ENCODE measurements at regions of chr2 and their contacts with region 1.

Region 1: GRCh38 chr2:36695746-36696415 is 626 bp upstream of the VIT start:
- DNase-seq: peak; percentile 57
- ATAC-seq: peak; percentile 95
- H3K4me3 ChIP-seq: no peak overlapping the region
- H3K27ac ChIP-seq: no peak overlapping the region
- H3K4me1 ChIP-seq: peaks cover 12% of the 10 kb centered on the region
- H3K27me3 ChIP-seq: no peaks in the 10 kb centered on the region
- CTCF ChIP-seq: peak; percentile 51

Region 2: DNA sequence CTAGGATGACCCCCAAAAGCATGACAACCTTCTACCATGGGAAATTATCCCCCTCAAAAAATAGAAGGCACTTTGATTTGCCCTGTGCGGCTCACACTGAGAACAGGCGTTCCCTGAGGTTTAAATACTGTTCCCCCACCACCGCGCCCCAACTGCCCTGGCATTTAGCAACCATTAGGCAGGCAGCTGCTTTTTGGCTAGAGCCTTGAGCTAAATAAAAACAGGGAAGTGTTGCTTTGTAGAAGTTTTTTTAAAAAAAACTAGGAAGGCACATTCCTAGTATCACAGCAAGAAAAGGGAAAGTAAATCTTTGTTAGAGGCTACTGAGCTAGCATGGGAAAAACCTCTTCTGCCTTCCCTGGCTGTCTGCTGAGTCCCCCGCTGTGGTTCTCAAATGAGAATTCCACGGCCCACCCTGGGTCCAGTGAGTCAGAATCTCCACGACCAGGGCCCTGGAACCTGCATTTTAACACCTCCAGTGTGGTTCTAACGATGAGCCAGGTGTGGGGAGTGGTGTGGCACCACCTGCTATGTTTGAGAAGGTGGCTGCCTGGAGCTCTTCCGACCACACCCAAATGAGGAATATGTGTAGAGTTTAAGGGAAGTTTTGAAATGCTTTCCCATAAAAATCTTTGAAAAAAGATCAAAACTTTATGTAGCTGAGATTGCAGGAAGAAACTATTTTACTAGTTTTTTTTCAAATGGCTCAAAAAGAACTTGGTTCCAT is 67.0 kb after region 1 on chr2:
- CTCF ChIA-PET with region 1: interaction called, 19 read pairs
- POLR2A ChIA-PET with region 1: no interaction called
- intact Hi-C with region 1: no loop called
- DNase-seq: no peak
- ATAC-seq: peak; percentile 18; the same call in 1 of the 2 replicates
- H3K4me3 ChIP-seq: no peak overlapping the region
- H3K27ac ChIP-seq: no peak overlapping the region
- H3K4me1 ChIP-seq: no peaks in the 10 kb centered on the region
- H3K27me3 ChIP-seq: peaks cover 34% of the 10 kb centered on the region
- CTCF ChIP-seq: no peak

Region 3: GRCh38 chr2:36777788-36778187 is 81.9 kb after region 1 on chr2:
- CTCF ChIA-PET with region 1: no interaction called
- POLR2A ChIA-PET with region 1: no interaction called
- intact Hi-C with region 1: loop called (anchors 5 kb)
- DNase-seq: no peak
- ATAC-seq: peak; percentile 63
- H3K4me3 ChIP-seq: no peak overlapping the region
- H3K27ac ChIP-seq: no peak overlapping the region
- H3K4me1 ChIP-seq: no peaks in the 10 kb centered on the region
- H3K27me3 ChIP-seq: no peaks in the 10 kb centered on the region; the same call in 1 of the 2 replicates
- CTCF ChIP-seq: peak; percentile 28; the same call in 1 of the 2 replicates

Region 4: GRCh38 chr2:36918307-36918706 is 222.4 kb after region 1 on chr2:
- CTCF ChIA-PET with region 1: no interaction called
- POLR2A ChIA-PET with region 1: no interaction called
- intact Hi-C with region 1: loop called (anchors 10 kb)
- DNase-seq: peak; percentile 13
- ATAC-seq: no peak
- H3K4me3 ChIP-seq: no peak overlapping the region
- H3K27ac ChIP-seq: no peak overlapping the region
- H3K4me1 ChIP-seq: 0 out of 2 replicates have a peak, but pooled peaks cover 2% of the 10 kb centered on the region
- H3K27me3 ChIP-seq: no peaks in the 10 kb centered on the region
- CTCF ChIP-seq: peak; percentile 37; the same call in 1 of the 2 replicates

Region 5: DNA sequence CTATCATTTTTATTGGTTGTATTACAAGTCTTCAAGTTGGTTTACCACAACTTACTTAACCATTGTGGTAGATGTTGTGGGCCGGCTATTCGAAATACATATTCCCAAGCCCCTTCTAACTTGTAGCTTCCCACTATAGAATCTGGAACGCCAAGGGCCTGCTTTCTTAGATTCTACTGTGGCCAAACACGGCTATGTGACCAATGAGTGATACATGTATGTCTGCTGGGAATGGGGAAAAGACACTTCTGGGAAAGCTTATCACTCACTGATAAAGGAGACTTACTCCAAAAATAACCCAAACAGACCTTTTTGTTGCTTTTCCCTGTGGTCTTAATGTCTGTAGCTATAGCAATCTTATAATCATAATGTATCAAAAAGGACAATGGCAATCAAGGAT is 246.0 kb after region 1 on chr2:
- CTCF ChIA-PET with region 1: no interaction called
- POLR2A ChIA-PET with region 1: no interaction called
- intact Hi-C with region 1: no loop called
- DNase-seq: no peak
- ATAC-seq: no peak
- H3K4me3 ChIP-seq: no peak overlapping the region
- H3K27ac ChIP-seq: no peak overlapping the region
- H3K4me1 ChIP-seq: no peaks in the 10 kb centered on the region
- H3K27me3 ChIP-seq: no peaks in the 10 kb centered on the region
- CTCF ChIP-seq: no peak